ENCODE measurements at regions of chr19 and their contacts with region 1.

Region 1: DNA sequence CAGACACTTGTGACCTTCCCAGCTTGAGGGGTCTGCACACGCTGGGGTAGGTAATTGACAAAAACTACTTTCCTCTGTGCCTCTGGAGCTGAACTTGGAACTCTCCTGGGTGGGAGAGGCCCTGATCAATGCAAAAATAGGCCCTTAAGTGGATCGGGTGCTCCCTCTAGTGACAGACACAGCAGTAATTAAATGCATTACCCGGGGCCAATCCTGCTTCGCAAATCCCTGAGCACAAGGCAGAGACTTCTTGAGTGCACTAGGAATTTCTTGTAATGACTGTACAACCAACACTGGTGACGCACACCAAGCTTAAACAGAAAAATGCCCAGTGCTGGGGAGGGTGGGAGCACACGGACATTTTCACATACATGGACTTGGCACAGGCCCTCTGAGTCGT is 10.6 kb upstream of the UBE2S start:
- DNase-seq: peak; percentile 64
- H3K4me3 ChIP-seq: no peak overlapping the region
- H3K27ac ChIP-seq: no peak overlapping the region
- H3K4me1 ChIP-seq: no peaks in the 10 kb centered on the region
- H3K27me3 ChIP-seq: peaks cover 12% of the 10 kb centered on the region
- CTCF ChIP-seq: peak; percentile 55 to 77 (median 63)
- EP300 ChIP-seq: no peak
- POLR2A ChIP-seq: no peak

Region 2: DNA sequence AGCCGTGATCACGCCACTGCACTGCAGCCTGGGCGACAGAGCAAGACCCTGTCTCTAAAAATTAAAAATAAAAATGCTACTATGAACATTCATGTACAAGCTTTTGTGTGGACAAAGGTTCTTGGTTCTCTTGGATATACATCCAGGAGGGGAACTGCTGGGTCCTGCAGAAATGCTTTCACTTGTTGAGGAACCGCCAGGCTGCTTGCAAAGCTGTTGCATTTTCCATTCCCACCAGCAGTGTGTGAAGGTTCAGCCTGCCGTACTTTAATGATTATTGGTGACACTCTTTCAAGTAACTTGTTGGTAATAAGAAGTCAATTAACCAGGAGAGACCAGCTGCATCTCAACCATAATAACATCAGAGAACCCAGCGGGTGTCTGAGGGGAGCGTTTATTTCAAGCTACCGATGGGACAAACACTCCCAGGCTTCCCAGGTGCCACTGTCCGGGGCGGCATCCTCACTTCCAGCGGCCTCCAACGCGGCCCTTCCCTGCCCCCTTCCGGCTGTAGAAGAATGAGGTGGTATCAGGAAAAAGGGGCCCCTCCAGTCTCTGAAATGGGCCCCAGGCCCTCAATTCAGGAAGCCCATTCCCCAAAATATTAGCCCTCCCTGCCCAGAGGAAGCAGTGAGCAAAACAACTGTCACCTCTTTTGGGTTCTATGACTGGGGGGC is 285.6 kb before region 1 on chr19:
- in situ Hi-C with region 1: loop called in 1 of 4 experiments (anchors 10 kb)
- intact Hi-C with region 1: no loop called
- DNase-seq: no peak
- H3K4me3 ChIP-seq: no peak overlapping the region
- H3K27ac ChIP-seq: no peak overlapping the region
- H3K4me1 ChIP-seq: no peaks in the 10 kb centered on the region
- H3K27me3 ChIP-seq: peaks cover 79% of the 10 kb centered on the region
- CTCF ChIP-seq: peak in 1 of 5 experiments; percentile 3
- EP300 ChIP-seq: no peak
- POLR2A ChIP-seq: no peak

Region 3: GRCh38 chr19:55301459-55302317 is 116.5 kb before region 1 on chr19:
- in situ Hi-C with region 1: loop called in 3 of 4 experiments (anchors 10 to 25 kb)
- intact Hi-C with region 1: no loop called
- DNase-seq: peak; percentile 93
- H3K4me3 ChIP-seq: peak overlapping the region in 3 of 4 donors; percentile 8 to 41 (median 24)
- H3K27ac ChIP-seq: peak overlapping the region in 1 of 4 donors; percentile 9
- H3K4me1 ChIP-seq: peaks cover 4 to 10% (median 9%) of the 10 kb centered on the region in 4 donors
- H3K27me3 ChIP-seq: no peaks in the 10 kb centered on the region
- CTCF ChIP-seq: peak; percentile 95 to 99 (median 98)
- EP300 ChIP-seq: no peak
- POLR2A ChIP-seq: no peak

Region 4: DNA sequence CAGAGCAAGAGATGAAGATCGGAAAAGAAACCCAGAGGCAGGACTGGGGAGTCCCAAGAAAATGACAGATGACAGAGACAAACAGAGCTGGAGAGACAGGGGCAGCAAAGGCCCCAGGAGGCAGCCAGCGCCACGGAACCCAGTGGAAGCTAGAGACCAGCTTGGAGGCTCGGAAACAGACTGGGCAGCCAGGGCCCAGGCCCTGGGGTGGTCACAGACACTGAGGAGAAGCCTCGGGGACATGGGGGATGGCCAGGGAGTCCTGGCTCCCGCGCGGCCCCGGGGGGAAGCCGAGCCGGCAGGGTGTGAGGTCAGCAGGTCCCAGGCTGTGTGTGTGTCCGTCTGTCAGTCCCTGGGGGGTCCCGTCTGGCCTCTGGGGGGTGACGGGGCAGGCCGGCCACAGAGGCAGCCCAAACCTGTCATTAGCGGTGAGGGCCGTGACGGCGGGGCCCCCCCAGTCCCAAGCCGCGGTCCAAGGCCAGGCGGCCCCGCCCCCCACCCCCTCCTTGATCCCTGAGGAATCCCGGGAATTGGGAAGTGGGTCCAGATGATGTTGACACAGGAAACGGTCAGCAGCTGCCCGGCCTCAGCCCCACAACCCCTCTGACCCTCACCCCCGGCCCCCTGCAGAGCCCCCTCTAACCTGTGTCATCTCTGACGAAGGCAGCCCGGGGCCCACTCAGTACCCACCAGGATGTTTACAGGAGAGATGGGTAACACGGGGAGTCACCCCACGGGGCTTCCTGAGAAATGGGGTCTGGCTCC is 44.0 kb before region 1 on chr19:
- in situ Hi-C with region 1: no loop called
- intact Hi-C with region 1: no loop called
- DNase-seq: no peak
- H3K4me3 ChIP-seq: no peak overlapping the region
- H3K27ac ChIP-seq: peak overlapping the region in 1 of 4 donors; percentile 31
- H3K4me1 ChIP-seq: peaks cover 2 to 29% (median 16%) of the 10 kb centered on the region in 4 donors
- H3K27me3 ChIP-seq: peaks cover 74% of the 10 kb centered on the region
- CTCF ChIP-seq: no peak
- EP300 ChIP-seq: no peak
- POLR2A ChIP-seq: no peak

Region 5: GRCh38 chr19:55467236-55468053 is 49.3 kb after region 1 on chr19:
- in situ Hi-C with region 1: no loop called
- intact Hi-C with region 1: no loop called
- DNase-seq: peak; percentile 75
- H3K4me3 ChIP-seq: no peak overlapping the region
- H3K27ac ChIP-seq: no peak overlapping the region
- H3K4me1 ChIP-seq: peaks cover 3 to 7% (median 5%) of the 10 kb centered on the region in 4 donors
- H3K27me3 ChIP-seq: no peaks in the 10 kb centered on the region
- CTCF ChIP-seq: peak; percentile 91 to 100 (median 99)
- EP300 ChIP-seq: no peak
- POLR2A ChIP-seq: no peak